ENCODE measurements at regions of chr14 and their contacts with region 1.

Region 1: DNA sequence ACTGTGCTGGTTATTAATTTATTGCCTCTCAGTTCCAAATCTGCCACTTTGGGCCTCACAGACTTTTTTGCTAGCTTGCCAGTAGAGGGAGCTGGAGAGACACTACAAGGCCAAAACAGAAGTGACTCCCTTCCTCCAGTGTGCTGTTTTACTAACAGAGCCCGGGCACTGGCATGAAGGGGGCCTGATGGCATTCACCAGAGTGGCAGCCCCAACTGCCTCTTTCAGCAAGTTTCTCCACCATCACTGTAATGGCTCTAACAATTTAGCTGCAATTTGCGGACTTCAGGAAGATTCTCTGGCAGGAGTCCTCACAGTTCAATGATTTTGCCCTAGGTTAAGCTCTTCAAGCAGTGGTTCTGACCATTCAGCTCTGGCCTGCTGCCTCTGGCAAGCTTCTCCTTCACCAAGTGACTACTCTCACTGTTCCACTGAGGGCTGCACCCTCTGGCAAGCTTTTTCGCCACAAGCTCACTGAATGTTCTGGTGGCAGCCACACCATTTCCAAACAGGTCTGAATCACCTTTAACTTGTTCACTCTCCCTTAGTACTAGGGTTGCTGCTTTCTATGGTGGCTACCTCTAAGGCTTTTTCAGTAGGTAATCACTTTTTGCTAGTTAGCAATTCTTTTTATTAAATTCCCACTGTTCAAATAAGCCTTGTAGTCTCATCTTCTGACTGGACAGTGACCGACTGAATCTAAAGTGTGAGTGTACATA is 104.9 kb downstream of the ZC3H14 start:
- DNase-seq: peak; percentile 53 to 60 (median 55)
- H3K4me3 ChIP-seq: no peak overlapping the region
- H3K4me3 Mint-ChIP-seq: no peak overlapping the region
- H3K27ac ChIP-seq: no peak overlapping the region
- H3K27ac Mint-ChIP-seq: peak overlapping the region in 2 of 7 donors; percentile 24 to 43
- H3K4me1 ChIP-seq: no peaks in the 10 kb centered on the region
- H3K4me1 Mint-ChIP-seq: peaks cover 0 to 2% (median 0%) of the 10 kb centered on the region in 4 donors
- H3K27me3 ChIP-seq: no peaks in the 10 kb centered on the region
- H3K27me3 Mint-ChIP-seq: no peaks in the 10 kb centered on the region

Region 2: DNA sequence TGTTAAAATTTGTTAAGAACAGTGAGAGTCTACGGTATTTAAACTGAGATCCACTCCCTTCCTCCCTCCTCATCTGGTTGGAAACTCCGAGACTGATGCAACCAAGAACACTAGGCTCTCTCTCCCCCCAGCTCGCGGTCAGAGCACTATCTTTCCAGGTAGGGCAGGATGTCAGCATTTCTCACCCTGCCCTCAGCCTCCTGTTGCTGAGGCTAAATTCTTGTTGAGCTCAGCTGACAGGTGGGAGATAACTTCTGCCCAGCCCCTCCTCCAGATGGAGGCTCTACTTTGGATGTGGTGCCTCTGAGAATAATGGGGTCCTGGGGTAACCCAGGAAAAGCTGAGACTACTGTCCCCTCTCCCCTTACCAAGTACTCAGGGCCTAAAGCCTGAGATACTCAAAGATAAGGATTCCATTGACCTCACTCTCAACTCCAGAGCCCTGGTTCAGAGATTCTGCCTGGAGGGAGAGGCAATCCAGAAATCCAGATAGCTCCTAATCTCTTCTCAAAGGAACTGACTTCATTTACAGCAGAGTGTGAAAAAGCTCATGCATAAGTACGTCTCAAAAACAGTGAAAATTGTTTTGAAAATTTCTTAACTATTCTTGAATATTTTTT is 14.9 kb after region 1 on chr14:
- CTCF ChIA-PET with region 1: interaction called, 24 read pairs
- POLR2A ChIA-PET with region 1: no interaction called
- intact Hi-C with region 1: no loop called
- DNase-seq: no peak
- H3K4me3 ChIP-seq: no peak overlapping the region
- H3K4me3 Mint-ChIP-seq: no peak overlapping the region
- H3K27ac ChIP-seq: no peak overlapping the region
- H3K27ac Mint-ChIP-seq: no peak overlapping the region
- H3K4me1 ChIP-seq: no peaks in the 10 kb centered on the region
- H3K4me1 Mint-ChIP-seq: no peaks in the 10 kb centered on the region
- H3K27me3 ChIP-seq: no peaks in the 10 kb centered on the region
- H3K27me3 Mint-ChIP-seq: no peaks in the 10 kb centered on the region

Region 3: DNA sequence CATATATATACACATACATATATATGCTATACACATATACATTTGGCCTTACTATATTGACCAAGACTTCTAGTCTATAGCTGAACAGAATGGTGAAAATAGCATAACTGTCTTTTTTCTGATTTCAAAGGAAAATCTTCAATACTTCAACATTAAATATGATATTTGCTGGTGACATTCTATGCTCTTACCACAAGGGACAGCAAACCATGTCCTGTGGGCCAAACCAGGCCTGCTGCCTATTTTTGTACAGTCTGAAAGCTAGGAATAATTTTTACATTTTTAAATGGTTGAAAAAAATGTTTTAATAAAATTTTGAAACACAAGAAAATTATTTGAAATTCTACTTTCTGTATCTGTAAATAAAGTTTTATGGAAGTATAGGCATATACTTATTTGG is 61.4 kb after region 1 on chr14:
- CTCF ChIA-PET with region 1: no interaction called
- POLR2A ChIA-PET with region 1: no interaction called
- intact Hi-C with region 1: no loop called
- DNase-seq: no peak
- H3K4me3 ChIP-seq: no peak overlapping the region
- H3K4me3 Mint-ChIP-seq: no peak overlapping the region
- H3K27ac ChIP-seq: no peak overlapping the region
- H3K27ac Mint-ChIP-seq: no peak overlapping the region
- H3K4me1 ChIP-seq: no peaks in the 10 kb centered on the region
- H3K4me1 Mint-ChIP-seq: no peaks in the 10 kb centered on the region
- H3K27me3 ChIP-seq: no peaks in the 10 kb centered on the region
- H3K27me3 Mint-ChIP-seq: no peaks in the 10 kb centered on the region

Region 4: GRCh38 chr14:88792572-88793258 is 125.0 kb after region 1 on chr14 and contains the start of gene EML5:
- CTCF ChIA-PET with region 1: interaction called, 5 read pairs
- POLR2A ChIA-PET with region 1: interaction called, 3 read pairs
- intact Hi-C with region 1: loop called (anchors 1 kb)
- DNase-seq: peak; percentile 82 to 86 (median 86)
- H3K4me3 ChIP-seq: peak within 1 kb of the TSS; percentile 57 to 86
- H3K4me3 Mint-ChIP-seq: peak within 1 kb of the TSS; percentile 87 to 93 (median 92)
- H3K27ac ChIP-seq: peak within 1 kb of the TSS; percentile 63
- H3K27ac Mint-ChIP-seq: peak within 1 kb of the TSS; percentile 77 to 91 (median 87)
- H3K4me1 ChIP-seq: peaks cover 22% of the 10 kb centered on the region
- H3K4me1 Mint-ChIP-seq: peaks cover 8 to 23% (median 13%) of the 10 kb centered on the region in 4 donors
- H3K27me3 ChIP-seq: no peaks in the 10 kb centered on the region
- H3K27me3 Mint-ChIP-seq: peaks cover 0 to 2% of the 10 kb centered on the region in 2 donors
- total RNA-seq, gene EML5: 5.5 to 5.6 TPM

Region 5: DNA sequence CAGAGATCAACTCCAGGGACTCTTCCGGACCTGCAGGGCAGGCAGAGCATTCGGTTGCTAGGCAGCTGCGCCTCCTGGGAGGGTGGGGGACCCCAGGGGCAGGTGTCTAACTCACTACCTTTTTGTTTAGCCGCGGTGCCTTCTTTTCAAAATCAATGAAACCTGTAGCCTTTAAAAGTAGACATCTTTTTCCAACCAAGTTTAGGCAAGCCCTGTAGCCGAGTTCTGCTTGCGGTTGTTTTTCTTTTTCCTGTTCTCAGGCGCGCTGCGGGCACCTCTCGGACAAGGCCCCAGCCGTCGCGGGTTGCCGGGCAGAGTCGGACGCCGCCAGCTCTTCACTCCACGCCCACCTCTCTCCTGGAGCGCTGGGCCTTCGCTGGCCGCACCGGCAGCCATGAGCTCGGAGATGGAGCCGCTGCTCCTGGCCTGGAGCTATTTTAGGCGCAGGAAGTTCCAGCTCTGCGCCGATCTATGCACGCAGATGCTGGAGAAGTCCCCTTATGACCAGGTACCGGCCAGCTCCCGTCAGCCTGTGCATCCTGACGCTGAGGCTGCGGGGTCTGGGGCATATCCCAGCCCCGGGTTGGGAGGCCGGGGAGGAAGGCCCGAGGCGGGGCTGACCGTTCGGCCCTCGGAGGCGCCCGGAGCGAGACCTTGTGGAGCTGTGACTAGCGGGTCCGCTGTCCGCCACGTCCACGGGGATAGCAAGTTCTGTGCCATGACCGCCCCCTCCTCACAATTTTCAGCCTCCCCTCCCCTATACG is 156.8 kb after region 1 on chr14 and contains the start of gene TTC8:
- CTCF ChIA-PET with region 1: no interaction called
- POLR2A ChIA-PET with region 1: no interaction called
- intact Hi-C with region 1: loop called (anchors 1 kb)
- DNase-seq: peak; percentile 88 to 92 (median 90)
- H3K4me3 ChIP-seq: peak within 1 kb of the TSS; percentile 60 to 67
- H3K4me3 Mint-ChIP-seq: peak within 1 kb of the TSS; percentile 86 to 95 (median 90)
- H3K27ac ChIP-seq: peak within 1 kb of the TSS; percentile 66
- H3K27ac Mint-ChIP-seq: peak within 1 kb of the TSS; percentile 97 to 100 (median 99)
- H3K4me1 ChIP-seq: peaks cover 11% of the 10 kb centered on the region
- H3K4me1 Mint-ChIP-seq: peaks cover 5 to 14% (median 11%) of the 10 kb centered on the region in 4 donors
- H3K27me3 ChIP-seq: no peaks in the 10 kb centered on the region
- H3K27me3 Mint-ChIP-seq: peaks cover 0 to 8% of the 10 kb centered on the region in 2 donors
- total RNA-seq, gene TTC8: 1.4 to 1.5 TPM

Region 6: GRCh38 chr14:88868558-88869159 is 200.9 kb after region 1 on chr14:
- CTCF ChIA-PET with region 1: interaction called, 64 read pairs
- POLR2A ChIA-PET with region 1: no interaction called
- intact Hi-C with region 1: loop called (anchors 1 kb)
- DNase-seq: peak in 4 of 5 donors; percentile 5 to 12 (median 10)
- H3K4me3 ChIP-seq: no peak overlapping the region
- H3K4me3 Mint-ChIP-seq: no peak overlapping the region
- H3K27ac ChIP-seq: no peak overlapping the region
- H3K27ac Mint-ChIP-seq: no peak overlapping the region
- H3K4me1 ChIP-seq: no peaks in the 10 kb centered on the region
- H3K4me1 Mint-ChIP-seq: no peaks in the 10 kb centered on the region
- H3K27me3 ChIP-seq: no peaks in the 10 kb centered on the region
- H3K27me3 Mint-ChIP-seq: no peaks in the 10 kb centered on the region

Region 7: DNA sequence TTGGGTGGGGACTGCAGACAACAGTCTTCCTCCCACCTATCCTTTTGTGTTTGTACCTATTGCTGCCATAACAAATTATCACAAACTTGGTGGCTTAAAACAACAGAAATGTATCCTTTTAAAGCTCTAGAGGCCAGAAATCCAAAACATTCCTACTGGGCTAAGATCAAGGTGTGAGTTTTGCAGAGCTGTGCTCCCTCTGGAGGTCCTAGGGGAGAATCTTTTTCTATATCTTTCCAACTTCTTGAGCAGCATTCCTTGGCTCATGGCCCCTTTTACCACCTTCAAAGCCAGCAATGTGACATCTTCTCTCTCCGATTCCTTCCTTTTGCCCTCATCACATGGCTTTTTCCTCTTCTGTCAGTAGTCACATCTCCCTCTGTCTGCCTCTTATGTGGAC is 347.3 kb after region 1 on chr14:
- CTCF ChIA-PET with region 1: interaction called, 3 read pairs
- POLR2A ChIA-PET with region 1: no interaction called
- intact Hi-C with region 1: loop called (anchors 5 kb)
- DNase-seq: no peak
- H3K4me3 ChIP-seq: no peak overlapping the region
- H3K4me3 Mint-ChIP-seq: no peak overlapping the region
- H3K27ac ChIP-seq: no peak overlapping the region
- H3K27ac Mint-ChIP-seq: no peak overlapping the region
- H3K4me1 ChIP-seq: no peaks in the 10 kb centered on the region
- H3K4me1 Mint-ChIP-seq: peaks cover 0 to 2% (median 0%) of the 10 kb centered on the region in 4 donors
- H3K27me3 ChIP-seq: no peaks in the 10 kb centered on the region
- H3K27me3 Mint-ChIP-seq: peaks cover 2 to 25% of the 10 kb centered on the region in 2 donors

Measured in CD4-positive, alpha-beta memory T cell (primary cell).